PC-3 (cell line): ENCODE measurements at regions of chr19 and their contacts with region 1.

Region 1: GRCh38 chr19:43463381-43464136 is 1.8 kb downstream of the LYPD3 start:
- DNase-seq: peak; percentile 91
- ATAC-seq: peak; percentile 73
- H3K4me3 ChIP-seq: peak overlapping the region; percentile 81
- H3K27ac ChIP-seq: peak overlapping the region; percentile 86
- H3K4me1 ChIP-seq: peaks cover 42% of the 10 kb centered on the region
- H3K27me3 ChIP-seq: no peaks in the 10 kb centered on the region
- CTCF ChIP-seq: no peak

Region 2: DNA sequence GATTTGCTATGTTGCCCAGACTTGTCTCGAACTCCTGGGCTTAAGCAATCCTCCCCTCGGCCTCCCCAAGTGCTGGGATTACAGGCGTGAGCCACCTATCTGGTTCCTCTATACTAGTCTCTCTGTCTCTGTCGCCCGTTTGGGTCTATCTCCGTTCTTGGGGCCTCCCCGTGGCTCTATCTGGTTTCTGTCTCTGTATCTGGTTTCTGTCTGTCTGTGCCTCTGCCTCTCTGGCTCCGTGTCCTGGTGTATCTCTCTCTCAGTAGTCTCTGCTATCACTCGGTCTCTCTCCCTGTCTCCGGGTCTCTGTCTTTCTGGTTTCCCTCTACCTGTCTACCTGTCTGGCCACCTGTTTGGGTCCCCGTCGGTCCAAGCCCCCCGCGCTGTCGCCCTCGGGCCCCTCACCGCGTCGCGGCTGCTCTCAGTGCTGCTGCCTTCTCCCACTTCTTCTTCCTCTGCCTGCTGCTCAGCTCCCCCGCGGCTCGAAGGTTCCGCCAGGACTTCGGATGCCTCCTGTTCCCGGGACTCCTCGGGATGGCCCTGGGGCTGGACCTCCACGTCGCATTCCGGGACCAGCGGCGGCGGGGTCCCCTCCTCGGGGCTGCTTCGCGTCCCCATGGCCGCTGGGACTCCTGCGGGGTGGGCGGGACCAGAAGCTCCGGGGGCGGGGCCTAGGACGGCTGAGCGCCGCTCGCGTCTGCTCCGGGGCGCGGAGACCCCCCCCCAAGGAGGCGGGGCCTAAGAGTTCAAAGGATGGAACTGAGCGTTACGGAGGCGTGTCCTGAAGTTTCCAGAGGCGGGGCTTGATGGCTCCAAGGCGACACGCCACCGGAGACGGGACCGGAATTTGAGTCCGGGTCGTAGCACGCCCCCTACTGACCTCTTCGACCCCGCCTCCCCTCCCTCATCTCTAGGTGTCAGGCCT is 40.2 kb after region 1 on chr19:
- CTCF ChIA-PET with region 1: interaction called, 4 read pairs
- POLR2A ChIA-PET with region 1: no interaction called
- intact Hi-C with region 1: loop called (anchors 5 kb)
- DNase-seq: peak; percentile 91
- ATAC-seq: peak; percentile 92
- H3K4me3 ChIP-seq: peak overlapping the region; percentile 84
- H3K27ac ChIP-seq: no peak overlapping the region
- H3K4me1 ChIP-seq: 0 out of 2 replicates have a peak, but pooled peaks cover 9% of the 10 kb centered on the region
- H3K27me3 ChIP-seq: no peaks in the 10 kb centered on the region
- CTCF ChIP-seq: no peak; the same call in 1 of the 2 replicates

Region 3: GRCh38 chr19:43524922-43525835 is 61.6 kb after region 1 on chr19:
- CTCF ChIA-PET with region 1: no interaction called
- POLR2A ChIA-PET with region 1: interaction called, 12 read pairs
- intact Hi-C with region 1: no loop called
- DNase-seq: peak; percentile 66
- ATAC-seq: peak; percentile 74
- H3K4me3 ChIP-seq: peak overlapping the region; percentile 98
- H3K27ac ChIP-seq: peak overlapping the region; percentile 18; the same call in 1 of the 2 replicates
- H3K4me1 ChIP-seq: peaks cover 12% of the 10 kb centered on the region; the same call in 1 of the 2 replicates
- H3K27me3 ChIP-seq: no peaks in the 10 kb centered on the region
- CTCF ChIP-seq: no peak

Region 4: DNA sequence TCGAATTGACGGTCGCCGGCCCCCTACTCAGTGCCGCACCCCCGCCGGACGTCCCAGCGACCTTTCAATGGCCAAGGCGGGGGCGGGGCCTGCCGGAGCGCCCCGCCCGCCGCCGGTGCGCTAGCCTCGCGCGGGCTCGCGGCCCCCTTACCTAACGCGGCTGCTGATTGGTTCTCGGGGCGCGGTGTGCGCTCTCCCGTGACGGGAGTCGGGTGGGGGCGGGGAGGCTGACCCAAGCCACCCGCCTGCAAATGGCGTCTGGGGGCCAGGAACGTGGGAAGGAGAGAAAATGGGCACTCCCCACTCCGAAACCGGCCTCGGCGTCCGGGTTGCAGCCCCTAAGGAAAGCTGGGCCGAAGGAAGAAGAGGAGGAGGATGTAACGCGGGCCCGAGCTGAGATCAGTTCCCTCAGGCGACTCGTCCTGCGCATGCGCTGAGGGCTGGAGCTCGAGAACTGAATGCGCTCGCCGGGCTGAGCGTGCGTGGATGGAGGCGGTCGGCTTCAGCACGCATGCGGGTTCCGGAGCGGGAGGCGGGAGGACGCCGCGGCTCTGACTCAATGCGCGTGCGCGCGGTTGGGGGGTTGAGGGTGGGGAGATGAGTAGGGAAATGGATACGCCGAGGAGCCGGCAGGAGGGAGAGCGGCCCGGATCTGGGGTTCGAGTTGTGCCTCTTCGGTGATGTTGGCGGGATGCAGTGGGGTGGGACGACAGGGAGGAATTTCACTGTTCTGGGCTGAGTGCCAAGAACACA is 291.1 kb after region 1 on chr19 and contains the start of gene SMG9:
- CTCF ChIA-PET with region 1: interaction called, 12 read pairs
- POLR2A ChIA-PET with region 1: no interaction called
- intact Hi-C with region 1: no loop called
- DNase-seq: peak; percentile 95
- ATAC-seq: peak; percentile 64
- H3K4me3 ChIP-seq: peak within 1 kb of the TSS; percentile 96
- H3K27ac ChIP-seq: peak within 1 kb of the TSS; percentile 99
- H3K4me1 ChIP-seq: peaks cover 66% of the 10 kb centered on the region
- H3K27me3 ChIP-seq: no peaks in the 10 kb centered on the region
- CTCF ChIP-seq: no peak
- total RNA-seq, gene SMG9: 48.8 and 49.1 TPM in 2 replicates

Region 5: GRCh38 chr19:44570984-44571684 is 1107.6 kb after region 1 on chr19:
- CTCF ChIA-PET with region 1: interaction called, 14 read pairs
- POLR2A ChIA-PET with region 1: no interaction called
- intact Hi-C with region 1: no loop called
- DNase-seq: peak; percentile 85
- ATAC-seq: peak; percentile 84
- H3K4me3 ChIP-seq: no peak overlapping the region; the same call in 1 of the 2 replicates
- H3K27ac ChIP-seq: no peak overlapping the region
- H3K4me1 ChIP-seq: peaks cover 15% of the 10 kb centered on the region
- H3K27me3 ChIP-seq: peaks cover 14% of the 10 kb centered on the region
- CTCF ChIP-seq: peak; percentile 80